Psoas muscle (tissue), 8 donors: ENCODE measurements at regions of chr6 and their contacts with region 1.

Region 1: GRCh38 chr6:61809004-61809595 is 476.9 kb downstream of the KHDRBS2 start:
- DNase-seq: no peak
- ATAC-seq: no peak
- H3K4me3 ChIP-seq: no peak overlapping the region
- H3K27ac ChIP-seq: no peak overlapping the region
- H3K4me1 ChIP-seq: no peaks in the 10 kb centered on the region
- H3K27me3 ChIP-seq: no peaks in the 10 kb centered on the region
- CTCF ChIP-seq: peak; percentile 32

Region 2: GRCh38 chr6:61857541-61857940 is 48.4 kb after region 1 on chr6:
- intact Hi-C with region 1: no loop called
- DNase-seq: no peak
- ATAC-seq: no peak
- H3K4me3 ChIP-seq: no peak overlapping the region
- H3K27ac ChIP-seq: no peak overlapping the region
- H3K4me1 ChIP-seq: no peaks in the 10 kb centered on the region
- H3K27me3 ChIP-seq: no peaks in the 10 kb centered on the region
- CTCF ChIP-seq: no peak

Region 3: DNA sequence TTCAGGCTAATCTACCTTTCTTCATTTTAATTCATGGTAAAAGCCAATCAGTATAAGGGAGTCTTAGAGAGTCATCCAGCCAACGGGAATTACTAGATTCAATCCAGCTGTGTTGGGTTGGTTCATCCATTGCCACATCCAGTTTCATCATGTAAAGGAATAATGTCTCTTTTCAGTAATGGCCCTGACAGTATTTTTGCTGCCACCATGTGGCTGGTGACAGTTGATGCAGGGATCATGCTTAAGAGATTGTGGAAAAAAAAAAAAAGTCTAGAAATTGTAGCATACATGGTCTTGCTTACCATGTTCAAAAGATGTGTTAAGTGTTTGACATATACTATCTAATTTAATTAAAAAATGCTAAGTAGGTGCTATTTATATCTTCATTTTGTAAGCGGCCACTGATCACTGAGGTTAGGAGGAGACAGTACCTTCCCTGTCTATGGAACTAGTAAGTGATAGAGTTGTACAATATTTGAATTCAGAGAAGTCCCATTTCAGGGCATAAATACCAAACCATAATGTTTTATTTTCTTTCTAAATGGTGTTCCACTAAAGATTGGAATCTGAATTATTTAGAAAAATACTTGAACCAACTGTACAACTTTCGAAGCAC is 341.1 kb after region 1 on chr6:
- intact Hi-C with region 1: loop called in 1 of 2 experiments (anchors 10 kb)
- DNase-seq: no peak
- ATAC-seq: peak in 1 of 4 donors; percentile 13
- H3K4me3 ChIP-seq: no peak overlapping the region
- H3K27ac ChIP-seq: no peak overlapping the region
- H3K4me1 ChIP-seq: no peaks in the 10 kb centered on the region
- H3K27me3 ChIP-seq: no peaks in the 10 kb centered on the region
- CTCF ChIP-seq: peak; percentile 46